ENCODE measurements at regions of chr1 and their contacts with region 1.

Region 1: GRCh38 chr1:155193275-155193990 is 14.3 kb downstream of the THBS3 start:
- DNase-seq: peak; percentile 71
- H3K4me3 Mint-ChIP-seq: peak overlapping the region; percentile 91
- H3K27ac Mint-ChIP-seq: peak overlapping the region; percentile 97
- H3K4me1 Mint-ChIP-seq: peaks cover 25% of the 10 kb centered on the region
- H3K27me3 Mint-ChIP-seq: no peaks in the 10 kb centered on the region

Region 2: GRCh38 chr1:155001675-155002463 is 191.6 kb before region 1 on chr1:
- intact Hi-C with region 1: loop called (anchors 5 kb)
- DNase-seq: peak; percentile 98
- H3K4me3 Mint-ChIP-seq: peak overlapping the region; percentile 97
- H3K27ac Mint-ChIP-seq: peak overlapping the region; percentile 97
- H3K4me1 Mint-ChIP-seq: peaks cover 47% of the 10 kb centered on the region
- H3K27me3 Mint-ChIP-seq: no peaks in the 10 kb centered on the region

Region 3: GRCh38 chr1:155208541-155209311 is 15.3 kb after region 1 on chr1 and contains the start of gene MTX1:
- intact Hi-C with region 1: loop called (anchors 2 kb)
- DNase-seq: peak; percentile 84
- H3K4me3 Mint-ChIP-seq: peak within 1 kb of the TSS; percentile 92
- H3K27ac Mint-ChIP-seq: peak within 1 kb of the TSS; percentile 87
- H3K4me1 Mint-ChIP-seq: peaks cover 24% of the 10 kb centered on the region
- H3K27me3 Mint-ChIP-seq: no peaks in the 10 kb centered on the region
- total RNA-seq, gene MTX1: 58.6 and 64.0 TPM in 2 replicates

Region 4: DNA sequence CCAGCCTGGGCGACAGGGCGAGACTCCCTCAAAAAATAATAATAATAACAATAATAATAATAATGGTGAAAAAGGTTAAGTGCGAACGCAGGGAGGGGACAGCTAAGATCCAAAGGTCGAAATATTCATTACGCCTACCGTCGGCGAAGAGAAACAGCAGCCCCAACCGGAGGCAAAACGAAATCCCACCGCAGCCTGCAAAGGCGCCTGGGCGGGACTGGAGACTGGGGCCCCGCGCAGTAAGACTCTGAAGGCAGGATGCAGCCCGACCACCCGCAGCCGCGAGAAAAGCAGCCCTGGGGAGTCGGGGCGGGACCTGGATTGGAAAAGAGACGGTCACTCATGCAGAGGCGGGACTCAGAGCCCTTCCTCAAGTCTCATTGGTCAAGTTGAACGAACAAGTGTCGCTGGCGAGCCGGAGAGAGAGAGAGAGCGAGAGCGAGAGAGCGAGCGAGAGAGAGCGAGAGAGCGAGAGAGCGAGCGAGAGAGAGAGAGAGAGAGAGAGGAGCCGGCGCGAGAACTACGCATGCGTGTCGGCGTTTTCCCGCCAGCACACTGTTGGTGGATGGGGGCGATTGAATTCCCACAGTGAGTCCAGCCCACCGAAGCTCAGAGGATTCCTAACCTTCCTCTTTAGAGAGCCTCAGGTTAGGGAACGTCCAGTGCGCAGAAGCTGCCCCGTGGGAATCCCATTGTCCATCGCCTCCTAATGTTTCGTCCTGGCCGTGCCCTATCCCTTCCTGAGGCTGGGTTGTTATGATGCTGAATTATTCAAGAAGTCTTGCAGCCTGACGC is 51.1 kb after region 1 on chr1:
- intact Hi-C with region 1: loop called (anchors 5 kb)
- DNase-seq: peak; percentile 97
- H3K4me3 Mint-ChIP-seq: peak overlapping the region; percentile 77
- H3K27ac Mint-ChIP-seq: peak overlapping the region; percentile 87
- H3K4me1 Mint-ChIP-seq: peaks cover 32% of the 10 kb centered on the region
- H3K27me3 Mint-ChIP-seq: peaks cover 2% of the 10 kb centered on the region